Ovary (tissue), 10 donors: ENCODE measurements at regions of chr19 and their contacts with region 1.

Region 1: DNA sequence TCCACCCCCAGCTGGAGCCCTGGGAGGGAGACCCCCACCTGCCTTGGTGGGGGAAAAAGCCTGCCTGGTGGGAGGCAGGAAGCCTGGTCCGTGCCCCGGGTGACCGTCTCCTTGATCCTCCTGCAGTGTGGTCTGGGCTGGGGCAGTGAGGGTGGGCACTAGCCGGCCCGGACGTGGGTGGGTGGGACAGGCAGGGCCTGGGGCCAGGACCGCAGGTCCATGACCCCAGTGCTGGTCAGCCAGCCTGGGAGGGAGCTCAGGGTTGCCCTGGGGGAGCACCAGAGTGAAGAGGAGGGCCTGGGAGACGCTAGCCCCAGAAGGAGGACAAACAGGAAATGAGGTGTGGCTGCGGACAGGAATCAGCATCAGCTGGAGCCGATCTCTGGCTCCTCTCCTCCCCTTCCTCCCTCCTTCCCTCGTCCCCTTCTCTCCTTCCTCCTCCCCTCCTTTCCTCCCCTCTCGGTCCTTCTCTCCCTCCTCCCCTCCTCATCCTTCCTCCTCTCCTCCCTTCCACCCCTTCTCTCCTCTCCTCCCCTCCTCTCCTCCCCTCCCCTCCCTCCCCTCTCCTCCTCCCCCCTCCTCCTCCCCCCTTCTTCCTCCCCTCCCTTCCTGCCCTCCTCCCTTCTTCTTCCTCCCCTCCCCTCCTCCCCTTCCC is 5.3 kb upstream of the MKNK2 start:
- DNase-seq: peak; percentile 79 to 88 (median 82)
- H3K4me3 ChIP-seq: peak overlapping the region; percentile 54
- H3K27ac ChIP-seq: peak overlapping the region; percentile 100
- H3K4me1 ChIP-seq: peaks cover 34% of the 10 kb centered on the region
- H3K27me3 ChIP-seq: no peaks in the 10 kb centered on the region
- CTCF ChIP-seq: no peak
- EP300 ChIP-seq: no peak
- POLR2A ChIP-seq: peak; percentile 74

Region 2: GRCh38 chr19:1766800-1767352 is 289.4 kb before region 1 on chr19:
- intact Hi-C with region 1: no loop called
- DNase-seq: no peak
- H3K4me3 ChIP-seq: no peak overlapping the region
- H3K27ac ChIP-seq: no peak overlapping the region
- H3K4me1 ChIP-seq: no peaks in the 10 kb centered on the region
- H3K27me3 ChIP-seq: peaks cover 8% of the 10 kb centered on the region
- CTCF ChIP-seq: no peak
- EP300 ChIP-seq: no peak
- POLR2A ChIP-seq: no peak

Region 3: DNA sequence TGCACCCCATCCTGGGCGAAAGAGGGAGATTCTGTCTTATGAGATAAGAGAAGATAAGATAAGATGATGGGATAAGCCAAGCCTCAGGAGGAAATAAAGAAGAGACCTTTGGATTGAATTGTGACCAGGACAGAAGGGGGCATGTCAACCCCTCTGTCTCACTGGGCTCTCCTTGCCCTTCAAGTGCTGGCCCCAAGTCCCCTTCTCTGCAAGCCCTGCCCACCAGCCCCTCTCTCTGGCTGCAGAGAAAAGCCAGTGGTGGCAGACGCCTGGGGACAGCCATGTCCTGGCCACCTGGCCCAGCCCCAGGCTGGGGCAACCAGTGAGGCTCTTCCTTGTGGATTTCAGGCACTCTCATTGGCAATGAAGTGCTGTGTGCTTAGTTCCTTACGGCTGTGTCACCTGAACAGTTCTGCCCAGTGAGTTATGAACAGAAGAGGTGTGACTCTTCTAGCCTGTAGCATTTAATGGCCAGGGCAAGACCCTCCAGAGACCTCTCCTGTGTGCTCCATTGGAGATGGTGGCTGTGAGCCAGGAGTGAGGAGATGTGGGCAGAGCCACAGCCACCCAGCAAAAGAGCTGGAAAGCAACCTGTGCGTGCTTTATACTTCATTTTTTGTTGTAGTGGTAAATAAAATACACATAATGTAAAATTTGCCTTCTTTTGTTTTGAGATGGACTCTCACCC is 34.7 kb before region 1 on chr19:
- intact Hi-C with region 1: loop called in 2 of 4 experiments (anchors 5 kb)
- DNase-seq: no peak
- H3K4me3 ChIP-seq: no peak overlapping the region
- H3K27ac ChIP-seq: no peak overlapping the region
- H3K4me1 ChIP-seq: no peaks in the 10 kb centered on the region
- H3K27me3 ChIP-seq: no peaks in the 10 kb centered on the region
- CTCF ChIP-seq: no peak
- EP300 ChIP-seq: no peak
- POLR2A ChIP-seq: no peak